CD4-positive, alpha-beta memory T cell (primary cell): ENCODE measurements at regions of chr17 and their contacts with region 1.

Region 1: DNA sequence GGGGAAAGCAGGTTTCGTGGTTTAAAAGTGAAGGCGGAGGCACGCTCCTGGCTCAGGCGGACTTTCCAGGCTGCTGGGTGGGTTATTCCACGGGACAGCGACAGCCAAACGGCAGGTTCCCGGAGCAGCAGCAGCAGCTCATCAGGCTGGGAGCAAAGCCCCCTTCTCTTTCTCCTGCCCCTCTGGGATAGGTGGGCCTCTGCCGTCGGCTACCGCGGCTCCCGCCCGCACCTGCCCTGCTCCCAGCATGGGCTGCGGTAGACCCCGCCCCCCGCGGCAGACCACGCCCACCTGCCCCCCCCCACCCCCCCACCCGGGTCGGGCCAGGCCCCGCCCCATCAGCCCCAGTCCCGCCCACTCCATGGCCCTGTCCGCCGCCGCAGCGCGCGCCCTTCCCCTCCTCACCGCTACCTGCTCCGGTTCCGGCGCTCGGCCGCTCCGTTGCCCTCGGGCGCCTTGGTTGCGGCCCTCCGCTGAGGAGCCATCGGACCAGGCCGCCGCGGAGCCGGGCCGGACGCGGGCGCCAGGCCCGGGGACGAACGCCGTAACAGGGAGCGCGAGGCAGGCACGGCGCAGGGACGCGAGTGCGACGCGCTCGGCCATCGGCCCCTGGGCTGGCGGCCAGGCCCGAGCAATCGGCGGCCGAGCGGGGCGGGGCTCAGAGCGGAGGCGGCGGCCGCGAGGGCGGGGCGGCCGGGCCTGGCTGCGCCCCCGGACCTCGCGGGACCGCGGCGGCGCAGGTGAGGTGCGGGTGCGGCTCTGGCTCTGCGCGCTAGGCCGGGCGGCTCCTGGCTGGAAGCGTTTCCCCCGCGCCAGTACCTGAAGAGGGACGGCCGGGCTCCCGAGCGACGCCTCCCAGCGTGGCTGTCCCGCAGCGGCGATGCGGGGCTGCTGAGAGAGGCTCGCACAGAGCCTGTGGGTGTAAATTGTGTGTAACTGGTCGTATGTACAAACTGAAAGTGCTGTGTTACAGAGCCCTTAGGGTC is at the starts of genes HEXD and OGFOD3:
- DNase-seq: peak; percentile 82 to 96 (median 92)
- H3K4me3 ChIP-seq: peak within 1 kb of the TSS; percentile 55 to 58
- H3K4me3 Mint-ChIP-seq: peak within 1 kb of the TSS; percentile 82 to 90 (median 85)
- H3K27ac ChIP-seq: peak within 1 kb of the TSS; percentile 66
- H3K27ac Mint-ChIP-seq: peak within 1 kb of the TSS; percentile 75 to 91 (median 84)
- H3K4me1 ChIP-seq: peaks cover 32% of the 10 kb centered on the region
- H3K4me1 Mint-ChIP-seq: peaks cover 22 to 39% (median 27%) of the 10 kb centered on the region in 4 donors
- H3K27me3 ChIP-seq: no peaks in the 10 kb centered on the region
- H3K27me3 Mint-ChIP-seq: no peaks in the 10 kb centered on the region
- total RNA-seq, gene HEXD: 105 to 113 TPM
- total RNA-seq, gene OGFOD3: 28.8 to 30.3 TPM

Region 2: DNA sequence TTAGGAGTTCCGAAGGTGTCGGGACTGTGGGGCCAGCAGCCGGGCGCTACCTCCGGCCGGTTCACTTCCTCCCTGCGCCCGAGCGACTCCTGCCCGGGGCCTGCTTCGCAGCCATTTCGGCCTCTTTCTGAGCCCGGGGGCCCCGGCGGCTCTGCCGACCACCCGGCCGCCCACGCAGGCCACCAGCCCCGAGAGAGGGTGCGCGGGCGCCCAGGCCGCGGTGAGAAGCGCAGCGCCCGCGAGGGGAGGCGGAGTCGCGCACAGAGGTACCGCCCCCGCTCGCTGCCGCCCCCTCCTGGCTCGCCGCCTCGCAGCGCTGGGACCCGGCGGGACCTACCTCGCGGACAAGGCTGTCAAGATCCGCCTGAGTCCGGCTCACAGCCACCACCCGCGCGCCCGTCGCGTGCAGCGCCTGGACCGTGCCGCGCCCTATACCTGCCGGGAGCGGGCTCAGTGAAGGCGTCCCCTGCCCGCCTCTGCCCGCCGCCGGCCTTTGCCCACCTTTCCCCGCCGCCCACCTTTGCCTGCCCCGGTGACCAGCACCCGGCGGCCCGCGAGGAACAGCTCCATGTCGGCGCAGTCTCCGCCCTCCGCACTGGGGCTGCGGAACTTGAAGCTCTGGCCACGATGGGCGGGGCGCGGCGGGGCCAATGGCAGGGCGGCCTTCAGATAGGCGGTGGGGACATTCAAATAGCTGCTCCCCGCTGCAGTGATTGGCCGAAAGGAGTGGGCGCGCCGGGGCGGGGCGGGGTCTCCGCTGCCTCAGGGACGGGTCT is 381.0 kb before region 1 on chr17 and contains the start of gene DCXR:
- CTCF ChIA-PET with region 1: no interaction called
- POLR2A ChIA-PET with region 1: no interaction called
- intact Hi-C with region 1: loop called (anchors 10 kb)
- DNase-seq: peak; percentile 95 to 96 (median 95)
- H3K4me3 ChIP-seq: peak within 1 kb of the TSS; percentile 52 to 80
- H3K4me3 Mint-ChIP-seq: peak within 1 kb of the TSS; percentile 87 to 95 (median 90)
- H3K27ac ChIP-seq: peak within 1 kb of the TSS; percentile 57
- H3K27ac Mint-ChIP-seq: peak within 1 kb of the TSS; percentile 87 to 96 (median 93)
- H3K4me1 ChIP-seq: peaks cover 19% of the 10 kb centered on the region
- H3K4me1 Mint-ChIP-seq: peaks cover 13 to 36% (median 18%) of the 10 kb centered on the region in 4 donors
- H3K27me3 ChIP-seq: no peaks in the 10 kb centered on the region
- H3K27me3 Mint-ChIP-seq: no peaks in the 10 kb centered on the region
- total RNA-seq, gene DCXR: 65.9 to 68.2 TPM

Region 3: DNA sequence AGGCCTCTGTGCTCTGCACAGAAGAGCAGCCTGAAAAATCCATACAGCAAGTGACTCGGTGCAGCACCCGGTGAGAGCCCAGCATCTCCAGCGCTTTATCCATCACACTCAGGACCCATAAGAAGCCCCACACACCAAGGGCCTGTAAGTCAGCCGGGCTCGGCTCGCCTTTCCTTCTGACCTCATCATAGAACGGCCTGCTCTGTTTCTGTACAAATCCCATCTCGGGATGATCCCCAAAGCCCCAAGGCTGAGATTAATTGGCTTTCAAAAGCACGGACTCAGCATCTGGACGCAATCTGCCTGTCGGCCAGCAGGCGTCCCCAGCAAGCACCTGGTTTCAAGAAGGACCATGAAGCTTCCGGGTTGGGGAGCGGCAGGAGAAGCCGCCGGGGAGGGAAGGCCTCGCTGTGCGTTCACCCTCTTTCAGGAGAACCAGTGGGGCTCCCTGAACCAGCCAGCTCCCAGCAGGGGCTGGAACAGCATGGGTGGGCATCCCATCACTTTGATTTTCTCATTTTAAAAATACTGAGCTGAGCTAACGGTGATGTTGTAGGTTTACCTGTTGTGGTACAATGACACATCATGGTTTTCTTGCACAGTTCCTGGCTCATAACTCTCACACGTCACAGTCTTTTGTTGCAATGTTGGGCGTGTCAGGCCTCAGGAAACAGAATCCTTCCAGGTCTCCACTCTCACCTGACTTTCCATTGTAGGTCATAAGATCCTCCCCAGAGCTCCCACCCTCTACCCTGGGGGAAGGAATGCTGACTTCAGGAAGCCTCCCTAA is 212.4 kb before region 1 on chr17:
- CTCF ChIA-PET with region 1: interaction called, 3 read pairs
- POLR2A ChIA-PET with region 1: no interaction called
- intact Hi-C with region 1: loop called (anchors 10 kb)
- DNase-seq: peak; percentile 84 to 87 (median 86)
- H3K4me3 ChIP-seq: no peak overlapping the region
- H3K4me3 Mint-ChIP-seq: peak overlapping the region in 7 of 8 donors; percentile 39 to 81 (median 54)
- H3K27ac ChIP-seq: peak overlapping the region; percentile 61
- H3K27ac Mint-ChIP-seq: peak overlapping the region; percentile 96 to 99 (median 97)
- H3K4me1 ChIP-seq: peaks cover 26% of the 10 kb centered on the region
- H3K4me1 Mint-ChIP-seq: peaks cover 20 to 46% (median 33%) of the 10 kb centered on the region in 4 donors
- H3K27me3 ChIP-seq: no peaks in the 10 kb centered on the region
- H3K27me3 Mint-ChIP-seq: no peaks in the 10 kb centered on the region

Region 4: DNA sequence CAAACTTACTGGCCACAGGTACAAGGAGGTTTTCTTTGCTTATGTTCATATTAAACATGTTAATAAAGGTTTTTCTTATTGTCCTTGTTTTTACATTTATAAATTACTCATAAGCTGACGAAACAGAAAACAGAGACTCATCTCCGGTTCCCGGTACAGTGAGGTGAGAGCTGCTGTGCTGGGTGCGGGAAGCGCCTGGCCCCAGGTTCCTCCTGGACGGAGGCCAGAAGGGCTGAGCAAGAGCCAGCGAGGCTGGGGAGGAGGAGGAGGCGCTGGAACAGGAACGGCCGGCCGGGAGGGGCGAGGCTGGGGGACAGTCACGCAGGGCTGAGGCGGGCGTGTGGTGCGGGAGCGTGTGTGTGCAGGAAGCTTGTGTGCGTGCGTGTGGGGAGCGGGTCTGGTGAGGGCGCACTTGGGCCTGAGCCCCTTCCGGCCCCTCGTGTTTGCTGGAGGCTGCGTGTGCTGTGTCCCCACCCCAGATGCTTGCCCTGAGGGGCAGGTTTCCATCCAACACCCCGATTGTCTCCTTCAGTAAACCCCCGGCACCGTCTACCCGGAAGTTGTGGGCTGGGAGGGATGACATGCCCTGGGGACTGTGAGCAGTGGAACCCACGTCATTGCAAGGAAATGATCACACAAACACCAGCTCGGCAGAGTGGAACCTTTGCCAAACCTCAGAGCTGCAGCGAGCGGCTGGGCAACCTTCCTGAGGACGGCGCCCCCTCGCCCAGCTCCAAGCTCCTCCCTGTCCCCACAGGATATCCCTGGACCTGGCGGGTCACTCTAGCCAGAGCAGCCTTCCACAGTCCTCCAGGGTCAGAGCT is 120.4 kb before region 1 on chr17:
- CTCF ChIA-PET with region 1: interaction called, 3 read pairs
- POLR2A ChIA-PET with region 1: no interaction called
- intact Hi-C with region 1: loop called (anchors 1 kb)
- DNase-seq: peak; percentile 94 to 99 (median 95)
- H3K4me3 ChIP-seq: peak overlapping the region; percentile 21 to 81
- H3K4me3 Mint-ChIP-seq: peak overlapping the region; percentile 96 to 98 (median 97)
- H3K27ac ChIP-seq: peak overlapping the region; percentile 100
- H3K27ac Mint-ChIP-seq: peak overlapping the region; percentile 100
- H3K4me1 ChIP-seq: peaks cover 68% of the 10 kb centered on the region
- H3K4me1 Mint-ChIP-seq: peaks cover 46 to 91% (median 72%) of the 10 kb centered on the region in 4 donors
- H3K27me3 ChIP-seq: no peaks in the 10 kb centered on the region
- H3K27me3 Mint-ChIP-seq: no peaks in the 10 kb centered on the region

Region 5: DNA sequence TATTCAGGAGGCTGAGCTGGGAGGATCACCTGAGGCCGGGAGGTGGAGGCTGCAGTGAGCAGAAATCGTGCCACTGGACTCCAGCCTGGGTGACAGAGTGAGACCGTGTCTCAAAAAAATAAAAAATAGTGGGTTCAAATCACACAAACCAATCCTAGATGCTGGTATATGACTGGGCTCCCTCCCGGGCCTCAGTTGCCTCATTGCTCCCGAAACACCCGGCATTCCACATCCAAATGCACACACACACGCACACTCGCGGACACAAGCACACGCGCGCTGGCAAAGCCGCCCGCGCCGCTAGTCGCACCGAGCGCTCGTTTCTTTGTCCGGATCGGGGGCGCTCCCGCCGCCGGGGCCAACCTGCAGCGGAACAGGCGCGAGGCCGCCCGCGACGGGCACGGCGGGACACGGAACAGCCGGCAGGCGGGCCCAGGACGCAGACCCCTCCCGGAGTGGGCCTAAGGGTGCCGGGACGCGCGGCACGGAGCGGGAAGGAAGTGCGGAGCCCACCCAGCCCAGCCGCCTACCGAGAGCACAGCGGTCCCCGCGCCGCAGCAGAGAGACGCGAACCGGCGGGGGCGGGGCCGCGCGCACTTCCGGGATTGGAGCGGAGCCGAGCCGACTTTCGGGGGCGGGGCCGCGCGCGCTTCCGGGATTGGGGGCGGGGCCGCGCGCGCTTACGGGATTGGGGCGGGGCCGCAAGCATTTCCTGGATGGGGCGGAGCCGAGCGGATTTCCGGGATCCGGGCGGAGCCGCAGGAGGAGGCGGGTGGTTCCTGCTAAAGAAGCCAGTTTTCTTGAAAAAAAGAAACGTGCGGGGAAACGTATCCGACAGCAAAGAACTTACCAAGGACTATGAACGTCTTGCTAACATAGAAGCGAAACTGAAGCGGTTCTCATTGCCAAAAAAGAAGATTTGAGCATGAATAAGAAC is 32.1 kb after region 1 on chr17 and contains the start of gene CYBC1:
- CTCF ChIA-PET with region 1: interaction called, 3 read pairs
- POLR2A ChIA-PET with region 1: interaction called, 16 read pairs
- intact Hi-C with region 1: loop called (anchors 1 kb)
- DNase-seq: peak; percentile 90 to 93 (median 93)
- H3K4me3 ChIP-seq: peak within 1 kb of the TSS; percentile 86 to 95
- H3K4me3 Mint-ChIP-seq: peak within 1 kb of the TSS; percentile 86 to 98 (median 94)
- H3K27ac ChIP-seq: peak within 1 kb of the TSS; percentile 86
- H3K27ac Mint-ChIP-seq: peak within 1 kb of the TSS; percentile 93 to 99 (median 96)
- H3K4me1 ChIP-seq: peaks cover 45% of the 10 kb centered on the region
- H3K4me1 Mint-ChIP-seq: peaks cover 22 to 48% (median 30%) of the 10 kb centered on the region in 4 donors
- H3K27me3 ChIP-seq: no peaks in the 10 kb centered on the region
- H3K27me3 Mint-ChIP-seq: no peaks in the 10 kb centered on the region
- total RNA-seq, gene CYBC1: 236 to 249 TPM

Region 6: DNA sequence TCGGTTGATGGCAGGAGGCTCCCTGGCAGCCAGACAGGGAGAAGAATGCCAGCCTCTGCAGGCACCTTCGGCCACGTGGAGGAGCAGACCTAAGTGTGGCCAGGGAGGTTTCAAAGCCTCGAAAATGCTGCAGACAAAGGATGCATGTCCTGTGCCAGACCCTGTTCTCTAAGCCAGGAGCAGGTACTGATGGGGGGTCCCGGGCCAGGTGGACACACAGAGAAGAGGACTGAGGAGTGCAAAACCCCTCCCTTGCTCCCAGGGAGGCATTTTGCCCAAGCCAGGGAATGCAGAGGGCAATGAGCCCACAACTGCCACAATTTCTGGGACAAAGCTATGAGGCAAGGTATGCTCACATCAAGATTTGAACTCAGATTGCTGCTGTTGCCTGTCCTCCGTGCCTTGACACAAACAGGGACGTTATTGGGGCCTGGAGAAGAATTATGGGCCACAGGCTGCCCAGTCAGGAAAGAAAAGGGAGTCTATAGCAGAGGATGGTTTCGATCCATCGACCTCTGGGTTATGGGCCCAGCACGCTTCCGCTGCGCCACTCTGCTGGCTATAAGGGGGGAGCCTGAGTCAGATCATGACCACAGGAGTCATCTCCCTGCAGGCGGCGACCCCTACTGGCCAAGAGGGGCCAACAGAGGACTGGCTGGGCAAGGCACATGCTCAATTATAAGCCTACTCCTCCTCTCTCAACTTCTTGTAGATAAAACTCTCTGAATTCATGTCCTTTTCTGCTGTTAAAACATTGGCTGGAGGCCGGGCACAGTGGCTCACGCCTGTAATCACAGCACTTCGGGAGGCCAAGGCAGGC is 76.2 kb after region 1 on chr17:
- CTCF ChIA-PET with region 1: interaction called, 4 read pairs
- POLR2A ChIA-PET with region 1: interaction called, 3 read pairs
- intact Hi-C with region 1: loop called (anchors 2 kb)
- DNase-seq: peak; percentile 86 to 90 (median 88)
- H3K4me3 ChIP-seq: no peak overlapping the region
- H3K4me3 Mint-ChIP-seq: peak overlapping the region; percentile 36 to 86 (median 68)
- H3K27ac ChIP-seq: no peak overlapping the region
- H3K27ac Mint-ChIP-seq: peak overlapping the region; percentile 87 to 100 (median 92)
- H3K4me1 ChIP-seq: peaks cover 21% of the 10 kb centered on the region
- H3K4me1 Mint-ChIP-seq: peaks cover 12 to 34% (median 18%) of the 10 kb centered on the region in 4 donors
- H3K27me3 ChIP-seq: no peaks in the 10 kb centered on the region
- H3K27me3 Mint-ChIP-seq: peaks cover 0 to 5% of the 10 kb centered on the region in 2 donors

Region 7: GRCh38 chr17:82648166-82648668 is 229.9 kb after region 1 on chr17 and contains the start of gene WDR45B:
- CTCF ChIA-PET with region 1: no interaction called
- POLR2A ChIA-PET with region 1: no interaction called
- intact Hi-C with region 1: loop called (anchors 1 kb)
- DNase-seq: peak; percentile 87 to 89 (median 88)
- H3K4me3 ChIP-seq: peak within 1 kb of the TSS; percentile 78 to 89
- H3K4me3 Mint-ChIP-seq: peak within 1 kb of the TSS; percentile 79 to 89 (median 84)
- H3K27ac ChIP-seq: peak within 1 kb of the TSS; percentile 93
- H3K27ac Mint-ChIP-seq: peak within 1 kb of the TSS; percentile 84 to 92 (median 89)
- H3K4me1 ChIP-seq: peaks cover 30% of the 10 kb centered on the region
- H3K4me1 Mint-ChIP-seq: peaks cover 15 to 41% (median 25%) of the 10 kb centered on the region in 4 donors
- H3K27me3 ChIP-seq: no peaks in the 10 kb centered on the region
- H3K27me3 Mint-ChIP-seq: no peaks in the 10 kb centered on the region
- total RNA-seq, gene WDR45B: 66.3 to 66.7 TPM